ENCODE measurements at regions of chr6 and their contacts with region 1.

Region 1: GRCh38 chr6:97059473-97059872 is 134.9 kb downstream of the KLHL32 start:
- DNase-seq: peak in 1 of 2 experiments; percentile 54
- H3K4me3 ChIP-seq: no peak overlapping the region
- H3K27ac ChIP-seq: no peak overlapping the region
- H3K4me1 ChIP-seq: no peaks in the 10 kb centered on the region
- H3K27me3 ChIP-seq: no peaks in the 10 kb centered on the region
- CTCF ChIP-seq: peak; percentile 74

Region 2: DNA sequence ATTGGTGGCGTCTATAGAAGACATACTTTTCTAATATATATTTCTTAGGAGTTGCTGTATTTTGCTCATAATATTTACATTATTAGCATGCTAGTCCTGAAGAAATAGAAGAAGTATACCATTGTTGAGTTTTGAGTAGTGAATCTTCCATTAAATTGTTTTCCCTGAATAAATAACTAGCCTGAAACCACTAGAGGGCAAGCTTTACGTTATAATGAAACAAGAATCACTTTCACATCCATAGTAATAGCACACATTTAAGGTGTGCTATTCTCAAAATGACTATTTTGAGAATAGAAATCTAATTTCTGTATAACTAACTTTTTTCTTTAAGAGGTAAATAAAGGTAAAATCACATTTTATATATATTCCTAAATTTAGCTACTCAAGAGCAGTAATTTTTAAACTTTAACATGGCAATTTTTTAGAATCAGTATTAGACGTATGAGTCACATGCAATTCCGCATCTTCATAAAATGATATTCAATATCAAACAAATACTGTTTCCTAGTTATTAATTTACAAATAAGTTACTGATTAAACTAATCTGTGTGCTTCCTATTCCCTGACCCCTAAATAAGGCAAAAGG is 1695.4 kb before region 1 on chr6:
- CTCF ChIA-PET with region 1: no interaction called
- POLR2A ChIA-PET with region 1: no interaction called
- intact Hi-C with region 1: loop called (anchors 5 kb)
- DNase-seq: no peak
- H3K4me3 ChIP-seq: no peak overlapping the region
- H3K27ac ChIP-seq: no peak overlapping the region
- H3K4me1 ChIP-seq: no peaks in the 10 kb centered on the region
- H3K27me3 ChIP-seq: no peaks in the 10 kb centered on the region
- CTCF ChIP-seq: peak; percentile 76

Region 3: GRCh38 chr6:96626759-96627364 is 432.6 kb before region 1 on chr6:
- CTCF ChIA-PET with region 1: interaction called, 6 read pairs
- POLR2A ChIA-PET with region 1: no interaction called
- intact Hi-C with region 1: loop called (anchors 2 kb)
- DNase-seq: no peak
- H3K4me3 ChIP-seq: no peak overlapping the region
- H3K27ac ChIP-seq: no peak overlapping the region
- H3K4me1 ChIP-seq: no peaks in the 10 kb centered on the region
- H3K27me3 ChIP-seq: no peaks in the 10 kb centered on the region
- CTCF ChIP-seq: peak; percentile 68

Region 4: GRCh38 chr6:96990462-96990861 is 69.0 kb before region 1 on chr6:
- CTCF ChIA-PET with region 1: no interaction called
- POLR2A ChIA-PET with region 1: no interaction called
- intact Hi-C with region 1: no loop called
- DNase-seq: no peak
- H3K4me3 ChIP-seq: no peak overlapping the region
- H3K27ac ChIP-seq: no peak overlapping the region
- H3K4me1 ChIP-seq: no peaks in the 10 kb centered on the region
- H3K27me3 ChIP-seq: no peaks in the 10 kb centered on the region
- CTCF ChIP-seq: no peak

Region 5: DNA sequence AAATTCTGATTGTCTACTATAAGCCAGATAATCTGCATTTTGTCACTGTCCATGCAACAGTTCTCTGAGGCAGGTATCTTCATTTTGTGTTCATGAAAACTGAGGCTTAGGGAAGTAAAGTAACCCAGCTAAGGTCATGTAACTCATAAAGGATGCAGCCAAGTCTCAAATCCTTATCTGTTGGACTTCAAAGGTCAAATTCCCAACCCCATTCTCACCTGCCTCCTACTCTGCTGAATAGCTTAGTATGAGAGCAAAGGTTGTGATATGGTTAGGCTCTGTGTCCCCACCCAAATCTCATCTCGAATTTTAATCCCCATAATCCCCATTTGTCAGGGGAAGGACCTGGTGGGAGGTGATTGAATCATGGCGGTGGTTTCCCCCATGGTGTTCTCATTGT is 44.9 kb before region 1 on chr6:
- CTCF ChIA-PET with region 1: no interaction called
- POLR2A ChIA-PET with region 1: no interaction called
- intact Hi-C with region 1: no loop called
- DNase-seq: no peak
- H3K4me3 ChIP-seq: no peak overlapping the region
- H3K27ac ChIP-seq: no peak overlapping the region
- H3K4me1 ChIP-seq: no peaks in the 10 kb centered on the region
- H3K27me3 ChIP-seq: no peaks in the 10 kb centered on the region
- CTCF ChIP-seq: no peak

Region 6: DNA sequence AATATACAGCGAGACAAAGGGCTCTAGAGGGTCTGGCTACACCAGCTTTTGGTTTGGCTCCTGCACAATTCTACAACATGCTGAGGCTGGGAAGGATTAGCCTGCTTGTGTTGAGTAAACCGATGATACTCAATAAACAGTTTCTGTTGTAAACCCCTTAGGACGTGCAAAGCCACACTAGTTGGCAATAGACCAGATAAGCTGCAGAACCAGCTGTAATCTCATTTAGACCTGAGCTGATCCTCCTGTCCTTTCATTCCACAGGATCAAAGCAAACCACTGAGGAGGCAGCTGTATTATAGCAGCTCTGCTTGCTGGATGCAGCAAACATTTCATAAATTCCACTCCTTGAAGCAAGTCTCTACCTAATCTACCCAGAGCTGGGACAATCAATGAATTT is 143.9 kb after region 1 on chr6:
- CTCF ChIA-PET with region 1: no interaction called
- POLR2A ChIA-PET with region 1: no interaction called
- intact Hi-C with region 1: no loop called
- DNase-seq: no peak
- H3K4me3 ChIP-seq: no peak overlapping the region
- H3K27ac ChIP-seq: no peak overlapping the region
- H3K4me1 ChIP-seq: no peaks in the 10 kb centered on the region
- H3K27me3 ChIP-seq: no peaks in the 10 kb centered on the region
- CTCF ChIP-seq: no peak

Region 7: GRCh38 chr6:97978855-97979271 is 919.4 kb after region 1 on chr6:
- CTCF ChIA-PET with region 1: no interaction called
- POLR2A ChIA-PET with region 1: no interaction called
- intact Hi-C with region 1: no loop called
- DNase-seq: no peak
- H3K4me3 ChIP-seq: no peak overlapping the region
- H3K27ac ChIP-seq: no peak overlapping the region
- H3K4me1 ChIP-seq: no peaks in the 10 kb centered on the region
- H3K27me3 ChIP-seq: no peaks in the 10 kb centered on the region
- CTCF ChIP-seq: no peak